Naive thymus-derived CD4-positive, alpha-beta T cell (primary cell): ENCODE measurements at regions of chr6 and their contacts with region 1.

Region 1: GRCh38 chr6:37169496-37170272 is at the start of gene PIM1:
- DNase-seq: peak; percentile 91 to 98 (median 95)
- ATAC-seq: peak; percentile 94
- H3K4me3 ChIP-seq: peak within 1 kb of the TSS; percentile 71
- H3K4me3 Mint-ChIP-seq: peak within 1 kb of the TSS; percentile 92 to 100 (median 94)
- H3K27ac ChIP-seq: peak within 1 kb of the TSS; percentile 86
- H3K27ac Mint-ChIP-seq: peak within 1 kb of the TSS; percentile 93 to 98 (median 96)
- H3K4me1 ChIP-seq: peaks cover 21% of the 10 kb centered on the region in 2 donors
- H3K4me1 Mint-ChIP-seq: peaks cover 19 to 40% (median 34%) of the 10 kb centered on the region in 7 donors
- H3K27me3 ChIP-seq: no peaks in the 10 kb centered on the region
- H3K27me3 Mint-ChIP-seq: no peaks in the 10 kb centered on the region
- total RNA-seq, gene PIM1: 100 to 550 (median 172) TPM

Region 2: GRCh38 chr6:36678518-36679027 is 491.1 kb before region 1 on chr6 and contains the start of gene CDKN1A:
- CTCF ChIA-PET with region 1: no interaction called
- POLR2A ChIA-PET with region 1: no interaction called
- intact Hi-C with region 1: loop called in 1 of 2 experiments (anchors 5 kb)
- DNase-seq: peak; percentile 33 to 84 (median 51)
- ATAC-seq: peak; percentile 64
- H3K4me3 ChIP-seq: peak within 1 kb of the TSS; percentile 62
- H3K4me3 Mint-ChIP-seq: peak within 1 kb of the TSS; percentile 87 to 98 (median 94)
- H3K27ac ChIP-seq: peak within 1 kb of the TSS; percentile 66
- H3K27ac Mint-ChIP-seq: peak within 1 kb of the TSS; percentile 73 to 96 (median 87)
- H3K4me1 ChIP-seq: peaks cover 19 to 29% of the 10 kb centered on the region in 2 donors
- H3K4me1 Mint-ChIP-seq: peaks cover 16 to 65% (median 30%) of the 10 kb centered on the region in 7 donors
- H3K27me3 ChIP-seq: no peaks in the 10 kb centered on the region
- H3K27me3 Mint-ChIP-seq: peaks cover 0 to 5% (median 0%) of the 10 kb centered on the region in 5 donors
- total RNA-seq, gene CDKN1A: 1.5 to 156 (median 53.6) TPM

Region 3: GRCh38 chr6:36985808-36986703 is 183.6 kb before region 1 on chr6 and contains the start of gene MTCH1:
- CTCF ChIA-PET with region 1: no interaction called
- POLR2A ChIA-PET with region 1: interaction called, 29 read pairs
- intact Hi-C with region 1: loop called in 1 of 2 experiments (anchors 1 kb)
- DNase-seq: peak; percentile 85 to 98 (median 92)
- ATAC-seq: peak; percentile 93
- H3K4me3 ChIP-seq: peak within 1 kb of the TSS; percentile 98
- H3K4me3 Mint-ChIP-seq: peak within 1 kb of the TSS in 6 of 10 donors; percentile 98 to 100 (median 100)
- H3K27ac ChIP-seq: peak within 1 kb of the TSS; percentile 96
- H3K27ac Mint-ChIP-seq: peak within 1 kb of the TSS in 7 of 9 donors; percentile 98 to 99 (median 99)
- H3K4me1 ChIP-seq: peaks cover 22 to 27% of the 10 kb centered on the region in 2 donors
- H3K4me1 Mint-ChIP-seq: peaks cover 12 to 26% (median 18%) of the 10 kb centered on the region in 7 donors
- H3K27me3 ChIP-seq: no peaks in the 10 kb centered on the region
- H3K27me3 Mint-ChIP-seq: peaks cover 0 to 17% (median 0%) of the 10 kb centered on the region in 5 donors
- total RNA-seq, gene MTCH1: 123 to 198 (median 130) TPM

Region 4: DNA sequence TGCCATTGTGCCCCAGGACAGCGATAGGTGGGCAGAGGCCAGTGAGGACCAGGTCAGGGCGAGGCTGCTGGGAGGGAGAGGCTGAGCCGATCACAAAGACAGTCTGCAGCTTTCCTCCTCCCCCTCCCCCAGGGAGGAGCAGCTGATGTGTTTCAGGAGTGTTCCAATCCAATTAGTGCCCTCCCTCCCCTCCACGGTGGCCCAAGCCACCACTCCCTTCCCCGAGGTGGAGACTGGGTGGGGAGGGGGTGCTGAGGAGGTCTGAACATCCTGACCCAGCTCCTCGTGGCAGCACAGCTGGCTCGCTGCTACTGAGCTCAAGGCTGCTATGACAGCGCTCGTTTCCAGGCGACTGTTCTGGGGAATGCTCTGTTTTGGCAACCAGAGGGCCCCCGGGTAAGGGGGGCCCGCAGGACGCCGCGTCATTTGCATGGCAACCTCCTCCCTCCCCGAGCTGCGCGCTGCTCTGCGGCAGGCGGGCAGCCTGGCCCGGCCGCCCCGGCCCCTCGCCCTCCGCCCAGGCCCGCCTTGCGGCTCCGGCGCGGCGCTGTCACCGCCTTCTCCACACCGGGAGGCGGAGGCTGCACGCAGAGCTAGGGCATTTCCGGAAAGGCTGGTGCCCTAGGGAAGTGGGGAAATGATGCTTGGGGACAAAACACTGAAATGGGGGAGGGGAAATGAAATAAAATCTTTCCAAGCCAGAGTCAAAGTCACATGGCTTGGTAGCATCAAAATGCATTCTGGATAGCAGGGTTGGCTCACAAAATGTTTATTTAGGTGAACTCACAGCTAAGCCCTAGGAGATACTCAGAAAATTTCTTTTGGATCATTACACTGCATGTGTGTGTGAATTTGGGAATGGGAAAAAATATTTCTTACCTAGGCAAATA is 67.2 kb before region 1 on chr6:
- CTCF ChIA-PET with region 1: interaction called, 5 read pairs
- POLR2A ChIA-PET with region 1: interaction called, 12 read pairs
- intact Hi-C with region 1: loop called (anchors 1 kb)
- DNase-seq: peak; percentile 59 to 79 (median 75)
- ATAC-seq: peak; percentile 92
- H3K4me3 ChIP-seq: peak overlapping the region; percentile 47
- H3K4me3 Mint-ChIP-seq: peak overlapping the region; percentile 74 to 86 (median 80)
- H3K27ac ChIP-seq: peak overlapping the region; percentile 46
- H3K27ac Mint-ChIP-seq: peak overlapping the region; percentile 48 to 92 (median 87)
- H3K4me1 ChIP-seq: peaks cover 14 to 19% of the 10 kb centered on the region in 2 donors
- H3K4me1 Mint-ChIP-seq: peaks cover 16 to 55% (median 32%) of the 10 kb centered on the region in 7 donors
- H3K27me3 ChIP-seq: no peaks in the 10 kb centered on the region
- H3K27me3 Mint-ChIP-seq: no peaks in the 10 kb centered on the region

Region 5: DNA sequence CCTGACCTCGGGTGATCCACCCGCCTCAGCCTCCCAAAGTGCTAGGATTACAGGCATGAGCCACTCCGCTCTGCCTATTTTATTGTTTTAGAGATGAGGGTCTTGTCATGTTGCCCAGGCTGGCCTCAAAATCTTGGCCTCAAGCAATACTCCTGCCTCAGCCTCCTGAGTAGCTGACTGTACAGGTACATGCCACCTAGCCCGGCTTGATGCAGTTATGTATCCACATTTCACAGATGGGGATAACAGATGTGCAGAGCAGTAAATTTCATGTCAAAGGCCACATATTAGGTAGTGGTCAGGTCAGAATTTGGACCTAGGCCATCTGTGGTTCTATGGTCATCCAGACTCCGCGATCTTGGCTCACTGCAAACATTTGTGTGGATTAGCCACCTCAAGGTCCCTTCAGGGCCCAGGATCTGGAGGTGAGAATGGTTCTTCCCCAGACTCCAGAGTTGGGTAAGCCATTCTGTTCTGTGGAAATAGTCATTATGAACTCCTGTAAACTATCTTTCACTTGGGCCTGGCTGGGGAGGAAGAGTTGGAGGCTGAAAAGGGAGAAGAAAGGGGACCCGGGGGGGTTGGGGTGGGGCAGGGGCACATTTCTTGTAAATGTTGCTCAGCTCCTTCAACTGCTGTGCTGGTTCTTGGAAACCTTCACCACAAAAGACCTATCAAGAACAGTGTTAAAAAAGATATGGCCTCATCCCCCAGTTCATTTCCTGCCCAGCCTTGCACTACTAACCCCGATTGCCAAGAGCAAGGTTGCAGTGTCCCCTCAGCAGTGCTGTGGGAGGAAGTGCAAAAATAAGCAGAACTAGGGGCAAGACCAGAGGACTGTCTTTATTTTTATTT is 13.3 kb after region 1 on chr6:
- CTCF ChIA-PET with region 1: interaction called, 22 read pairs
- POLR2A ChIA-PET with region 1: interaction called, 68 read pairs
- intact Hi-C with region 1: loop called (anchors 1 kb)
- DNase-seq: peak in 8 of 9 donors; percentile 56 to 85 (median 70)
- ATAC-seq: peak; percentile 97
- H3K4me3 ChIP-seq: peak overlapping the region; percentile 41
- H3K4me3 Mint-ChIP-seq: peak overlapping the region; percentile 62 to 86 (median 72)
- H3K27ac ChIP-seq: peak overlapping the region; percentile 73
- H3K27ac Mint-ChIP-seq: peak overlapping the region; percentile 88 to 98 (median 94)
- H3K4me1 ChIP-seq: peaks cover 44 to 61% of the 10 kb centered on the region in 2 donors
- H3K4me1 Mint-ChIP-seq: peaks cover 21 to 72% (median 63%) of the 10 kb centered on the region in 7 donors
- H3K27me3 ChIP-seq: no peaks in the 10 kb centered on the region
- H3K27me3 Mint-ChIP-seq: no peaks in the 10 kb centered on the region

Region 6: DNA sequence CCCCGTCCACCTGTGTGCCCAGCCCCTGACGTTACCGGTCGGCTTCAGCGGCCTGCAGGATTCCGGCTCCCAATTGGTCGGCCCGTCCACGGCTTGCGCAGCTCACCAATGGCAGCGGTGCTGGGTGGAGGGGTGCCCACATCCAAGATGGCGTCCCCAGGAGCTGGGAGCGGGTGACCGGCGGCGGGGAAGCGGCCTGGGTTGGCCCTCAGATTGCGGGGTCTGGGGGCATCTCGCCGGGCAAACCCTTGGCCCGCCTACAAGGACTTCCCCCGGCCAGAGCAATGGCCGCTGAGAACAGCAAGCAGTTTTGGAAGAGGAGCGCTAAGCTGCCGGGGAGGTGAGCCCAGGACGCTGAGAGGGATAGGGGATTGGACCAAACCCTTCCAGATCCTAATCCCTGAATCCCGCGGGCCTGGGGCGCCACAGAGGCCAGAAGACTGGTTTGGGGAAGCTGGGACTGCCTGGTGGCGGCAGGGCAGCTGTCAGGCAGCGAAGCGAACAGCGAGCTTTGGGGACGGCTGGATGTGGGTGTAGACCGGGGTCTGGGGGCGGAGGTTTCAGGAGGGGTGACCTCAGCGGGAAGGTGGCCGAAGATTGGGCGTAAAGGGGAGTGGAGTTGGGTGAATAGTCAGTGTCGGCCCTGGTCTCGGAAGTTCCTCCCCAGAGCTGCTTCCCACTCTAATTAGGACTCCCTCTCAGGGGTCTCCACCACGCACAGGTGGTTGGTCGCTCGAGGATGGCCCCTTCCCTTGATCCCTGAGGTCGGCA is 88.1 kb after region 1 on chr6 and contains the starts of genes TBC1D22B and TMEM217:
- CTCF ChIA-PET with region 1: no interaction called
- POLR2A ChIA-PET with region 1: no interaction called
- intact Hi-C with region 1: loop called in 1 of 2 experiments (anchors 2 kb)
- DNase-seq: peak; percentile 85 to 94 (median 93)
- ATAC-seq: peak; percentile 100
- H3K4me3 ChIP-seq: peak within 1 kb of the TSS; percentile 92
- H3K4me3 Mint-ChIP-seq: peak within 1 kb of the TSS; percentile 80 to 99 (median 90)
- H3K27ac ChIP-seq: peak within 1 kb of the TSS; percentile 87
- H3K27ac Mint-ChIP-seq: peak within 1 kb of the TSS; percentile 71 to 95 (median 88)
- H3K4me1 ChIP-seq: peaks cover 18 to 21% of the 10 kb centered on the region in 2 donors
- H3K4me1 Mint-ChIP-seq: peaks cover 30 to 58% (median 45%) of the 10 kb centered on the region in 7 donors
- H3K27me3 ChIP-seq: no peaks in the 10 kb centered on the region
- H3K27me3 Mint-ChIP-seq: no peaks in the 10 kb centered on the region
- total RNA-seq, gene TBC1D22B: 8.3 to 23.5 (median 9.5) TPM
- total RNA-seq, gene TMEM217: 0.78 to 2.8 (median 1.6) TPM in 3 of 5 experiments, not detected in the others

Region 7: DNA sequence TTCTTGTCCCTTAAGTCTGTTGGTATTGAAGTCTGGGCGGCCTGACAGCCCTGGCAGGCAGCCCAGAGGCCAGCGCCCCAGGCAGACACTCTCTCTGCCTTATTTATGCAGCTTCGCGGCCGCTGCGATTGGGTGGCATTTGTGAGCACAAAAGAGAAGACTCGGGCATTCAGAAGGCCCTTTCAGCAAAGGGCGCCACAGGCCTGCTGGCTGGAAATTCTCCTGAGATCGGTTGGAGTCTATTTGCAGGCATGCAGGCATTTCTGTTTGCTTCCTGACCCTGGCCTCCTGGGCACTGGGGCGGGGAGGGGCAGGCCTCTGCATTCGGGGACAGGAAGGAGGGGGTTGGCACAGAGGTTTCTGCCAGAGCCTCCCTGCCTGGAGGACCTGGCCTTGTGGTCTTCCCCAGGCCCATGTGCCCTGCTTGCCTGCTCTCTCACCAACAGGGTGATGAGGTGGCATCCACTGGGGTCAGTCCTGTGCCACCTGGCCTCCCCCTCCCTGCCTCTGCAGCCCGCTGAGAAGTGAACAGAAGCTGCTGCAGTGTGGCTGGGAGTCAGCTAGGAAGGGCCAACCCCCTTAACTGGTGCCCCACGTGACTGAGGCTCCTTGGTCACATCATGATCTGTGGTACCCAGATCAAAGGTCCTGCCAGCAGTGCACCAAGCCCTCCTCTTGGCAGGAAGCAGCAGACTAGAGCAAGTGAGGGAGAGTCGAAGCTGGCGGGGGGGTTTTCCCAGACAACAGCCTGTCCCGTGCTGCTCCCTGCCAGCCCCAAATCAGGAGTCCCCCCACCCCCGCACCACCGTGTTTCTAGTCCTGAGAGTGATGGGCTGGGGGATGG is 346.6 kb after region 1 on chr6:
- CTCF ChIA-PET with region 1: no interaction called
- POLR2A ChIA-PET with region 1: no interaction called
- intact Hi-C with region 1: loop called in 1 of 2 experiments (anchors 5 kb)
- DNase-seq: peak; percentile 60 to 98 (median 89)
- ATAC-seq: peak; percentile 90
- H3K4me3 ChIP-seq: peak overlapping the region; percentile 55
- H3K4me3 Mint-ChIP-seq: peak overlapping the region; percentile 75 to 93 (median 84)
- H3K27ac ChIP-seq: peak overlapping the region; percentile 97
- H3K27ac Mint-ChIP-seq: peak overlapping the region; percentile 92 to 99 (median 97)
- H3K4me1 ChIP-seq: peaks cover 76 to 84% of the 10 kb centered on the region in 2 donors
- H3K4me1 Mint-ChIP-seq: peaks cover 51 to 89% (median 81%) of the 10 kb centered on the region in 7 donors
- H3K27me3 ChIP-seq: no peaks in the 10 kb centered on the region
- H3K27me3 Mint-ChIP-seq: no peaks in the 10 kb centered on the region